Gastrocnemius medialis (tissue), 4 donors: ENCODE measurements at regions of chr5 and their contacts with region 1.

Region 1: GRCh38 chr5:141475625-141476131 is at the start of gene PCDHGC3:
- DNase-seq: peak; percentile 92 to 95
- ATAC-seq: peak; percentile 95
- H3K4me3 ChIP-seq: peak within 1 kb of the TSS; percentile 69 to 83 (median 75)
- H3K27ac ChIP-seq: peak within 1 kb of the TSS; percentile 82 to 91 (median 88)
- H3K4me1 ChIP-seq: peaks cover 48 to 53% of the 10 kb centered on the region in 2 donors
- H3K27me3 ChIP-seq: no peaks in the 10 kb centered on the region
- CTCF ChIP-seq: peak in 4 of 5 experiments; percentile 36 to 63 (median 58)
- POLR2A ChIP-seq: peak; percentile 35 to 67
- total RNA-seq, gene PCDHGC3: 11.8 to 14.5 (median 13.8) TPM

Region 2: DNA sequence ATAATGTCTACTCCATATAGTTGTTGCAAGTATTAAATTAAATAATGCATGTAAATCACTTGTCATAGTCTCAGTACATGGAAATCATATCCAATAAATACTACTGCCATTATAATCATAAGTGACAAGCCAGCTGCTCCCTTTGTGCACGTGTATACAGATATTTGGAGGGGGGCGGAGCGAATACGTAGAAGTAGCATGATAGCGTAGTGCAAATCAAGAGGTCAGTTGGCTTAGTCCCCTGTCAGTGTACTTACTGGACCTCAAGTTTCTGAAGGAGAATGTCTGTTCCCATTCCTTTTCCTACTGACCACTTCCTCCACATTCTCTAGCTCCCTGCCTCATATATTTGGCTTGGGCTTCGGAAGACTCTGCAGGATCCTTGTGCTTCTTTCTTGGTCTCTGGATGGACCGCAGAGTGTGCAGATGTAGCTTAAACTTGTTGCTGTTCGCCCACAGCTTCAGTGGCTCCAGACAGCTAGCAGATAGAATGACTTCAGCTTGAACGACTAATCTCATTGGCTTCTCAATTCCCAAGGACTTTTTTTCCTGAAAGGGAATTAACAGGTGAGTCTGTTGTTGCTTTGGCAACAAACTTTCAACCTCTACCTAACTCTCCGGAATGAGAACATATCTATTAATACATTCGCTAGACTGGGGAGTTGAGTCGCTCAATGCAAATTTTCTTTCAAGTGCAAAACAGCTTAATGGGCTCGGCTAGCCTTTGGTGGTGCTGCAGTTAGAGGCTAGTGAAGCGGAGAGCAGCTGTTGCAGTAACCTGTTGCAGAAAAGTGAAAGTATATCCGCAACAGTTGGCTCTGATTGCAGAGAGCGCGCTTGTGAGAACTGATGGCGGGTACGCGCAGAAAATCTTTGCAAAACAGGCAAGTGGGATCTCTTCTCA is 424.8 kb before region 1 on chr5 and contains the start of gene PCDHB1:
- in situ Hi-C with region 1: no loop called
- intact Hi-C with region 1: no loop called
- DNase-seq: no peak
- ATAC-seq: no peak
- H3K4me3 ChIP-seq: peak within 1 kb of the TSS; percentile 50 to 62 (median 55)
- H3K27ac ChIP-seq: no peak within 1 kb of the TSS
- H3K4me1 ChIP-seq: no peaks in the 10 kb centered on the region
- H3K27me3 ChIP-seq: peaks cover 0 to 13% (median 11%) of the 10 kb centered on the region in 3 donors
- CTCF ChIP-seq: no peak
- POLR2A ChIP-seq: no peak
- total RNA-seq, gene PCDHB1: not detected

Region 3: DNA sequence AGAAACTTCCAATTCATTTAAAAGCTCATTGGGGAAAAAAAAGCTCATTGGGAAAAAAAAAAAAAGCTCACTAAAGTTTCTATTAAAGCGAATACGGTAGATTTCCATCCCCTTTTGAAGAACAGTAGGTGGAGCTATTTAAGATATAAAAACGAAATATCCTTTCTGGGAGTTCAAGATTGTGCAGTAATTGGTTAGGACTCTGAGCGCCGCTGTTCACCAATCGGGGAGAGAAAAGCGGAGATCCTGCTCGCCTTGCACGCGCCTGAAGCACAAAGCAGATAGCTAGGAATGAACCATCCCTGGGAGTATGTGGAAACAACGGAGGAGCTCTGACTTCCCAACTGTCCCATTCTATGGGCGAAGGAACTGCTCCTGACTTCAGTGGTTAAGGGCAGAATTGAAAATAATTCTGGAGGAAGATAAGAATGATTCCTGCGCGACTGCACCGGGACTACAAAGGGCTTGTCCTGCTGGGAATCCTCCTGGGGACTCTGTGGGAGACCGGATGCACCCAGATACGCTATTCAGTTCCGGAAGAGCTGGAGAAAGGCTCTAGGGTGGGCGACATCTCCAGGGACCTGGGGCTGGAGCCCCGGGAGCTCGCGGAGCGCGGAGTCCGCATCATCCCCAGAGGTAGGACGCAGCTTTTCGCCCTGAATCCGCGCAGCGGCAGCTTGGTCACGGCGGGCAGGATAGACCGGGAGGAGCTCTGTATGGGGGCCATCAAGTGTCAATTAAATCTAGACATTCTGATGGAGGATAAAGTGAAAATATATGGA is 45.2 kb before region 1 on chr5 and contains the start of gene PCDHGA12:
- in situ Hi-C with region 1: no loop called
- intact Hi-C with region 1: loop called (anchors 2 kb)
- DNase-seq: peak; percentile 62 to 78
- ATAC-seq: peak; percentile 89 to 97
- H3K4me3 ChIP-seq: peak within 1 kb of the TSS; percentile 39 to 48 (median 40)
- H3K27ac ChIP-seq: peak within 1 kb of the TSS; percentile 33 to 62 (median 46)
- H3K4me1 ChIP-seq: peaks cover 0 to 10% of the 10 kb centered on the region in 2 donors
- H3K27me3 ChIP-seq: no peaks in the 10 kb centered on the region
- CTCF ChIP-seq: peak; percentile 52 to 71 (median 55)
- POLR2A ChIP-seq: no peak
- total RNA-seq, gene PCDHGA12: 1.1 to 5.4 (median 1.7) TPM

Region 4: GRCh38 chr5:141488591-141489561 is 13.2 kb after region 1 on chr5 and contains the start of gene PCDHGC5:
- in situ Hi-C with region 1: no loop called
- intact Hi-C with region 1: no loop called
- DNase-seq: no peak
- ATAC-seq: no peak
- H3K4me3 ChIP-seq: no peak within 1 kb of the TSS
- H3K27ac ChIP-seq: no peak within 1 kb of the TSS
- H3K4me1 ChIP-seq: peaks cover 19 to 36% of the 10 kb centered on the region in 2 donors
- H3K27me3 ChIP-seq: no peaks in the 10 kb centered on the region
- CTCF ChIP-seq: no peak
- POLR2A ChIP-seq: no peak
- total RNA-seq, gene PCDHGC5: 0.16 to 1.5 (median 0.36) TPM in 3 of 4 donors, not detected in the other

Region 5: GRCh38 chr5:141507387-141508091 is 31.9 kb after region 1 on chr5:
- in situ Hi-C with region 1: no loop called
- intact Hi-C with region 1: loop called (anchors 2 kb)
- DNase-seq: peak; percentile 53 to 72
- ATAC-seq: peak; percentile 50 to 52
- H3K4me3 ChIP-seq: peak overlapping the region in 1 of 4 donors; percentile 5
- H3K27ac ChIP-seq: peak overlapping the region; percentile 84 to 88 (median 86)
- H3K4me1 ChIP-seq: peaks cover 37 to 50% of the 10 kb centered on the region in 2 donors
- H3K27me3 ChIP-seq: no peaks in the 10 kb centered on the region
- CTCF ChIP-seq: no peak
- POLR2A ChIP-seq: peak in 1 of 2 donors; percentile 8